Panc1 (cell line): ENCODE measurements at regions of chr6 and their contacts with region 1.

Region 1: DNA sequence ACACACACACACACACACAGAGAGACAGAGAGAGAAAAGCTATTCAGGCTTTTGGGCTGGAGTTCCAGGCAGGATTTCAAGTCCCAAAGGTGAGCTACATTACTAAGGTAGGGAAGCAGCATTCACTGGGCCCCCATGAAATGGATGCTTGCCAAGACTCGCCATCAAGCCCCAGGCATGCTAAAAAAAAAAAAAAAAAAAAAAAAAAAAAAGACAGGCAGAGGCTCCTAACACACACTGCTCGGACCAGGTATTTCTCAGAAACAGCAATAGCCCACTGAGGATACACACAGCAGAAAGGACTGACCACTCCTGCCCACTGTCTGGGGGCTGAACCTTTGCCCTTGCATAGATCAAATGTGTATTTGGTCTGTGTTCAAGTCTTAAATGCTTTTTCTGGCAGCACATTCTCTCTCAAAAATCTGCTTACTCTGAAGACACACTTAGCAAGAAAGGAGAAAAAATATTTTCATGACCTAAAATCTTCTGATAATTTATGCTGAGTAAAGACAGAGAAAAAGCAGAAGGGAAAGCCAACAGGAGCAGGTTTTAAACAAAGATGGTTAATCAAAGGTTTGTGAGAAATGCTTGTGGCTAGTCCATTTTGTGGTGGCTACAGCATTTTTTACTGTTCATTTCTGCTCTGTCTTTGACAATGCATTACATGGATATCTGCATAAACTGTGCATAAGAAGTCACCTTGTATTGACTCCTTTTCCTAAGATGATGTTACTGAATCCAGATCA is 37.9 kb upstream of the BEND6 start:
- DNase-seq: no peak
- ATAC-seq: no peak
- H3K4me3 ChIP-seq: no peak overlapping the region
- H3K27ac ChIP-seq: no peak overlapping the region
- H3K4me1 ChIP-seq: peaks cover 18% of the 10 kb centered on the region
- H3K27me3 ChIP-seq: no peaks in the 10 kb centered on the region
- CTCF ChIP-seq: no peak

Region 2: GRCh38 chr6:56802584-56802983 is 114.4 kb before region 1 on chr6:
- CTCF ChIA-PET with region 1: no interaction called
- POLR2A ChIA-PET with region 1: no interaction called
- in situ Hi-C with region 1: no loop called
- intact Hi-C with region 1: no loop called
- DNase-seq: no peak
- ATAC-seq: peak; percentile 86
- H3K4me3 ChIP-seq: no peak overlapping the region
- H3K27ac ChIP-seq: peak overlapping the region; percentile 86
- H3K4me1 ChIP-seq: peaks cover 58% of the 10 kb centered on the region
- H3K27me3 ChIP-seq: no peaks in the 10 kb centered on the region
- CTCF ChIP-seq: no peak

Region 3: DNA sequence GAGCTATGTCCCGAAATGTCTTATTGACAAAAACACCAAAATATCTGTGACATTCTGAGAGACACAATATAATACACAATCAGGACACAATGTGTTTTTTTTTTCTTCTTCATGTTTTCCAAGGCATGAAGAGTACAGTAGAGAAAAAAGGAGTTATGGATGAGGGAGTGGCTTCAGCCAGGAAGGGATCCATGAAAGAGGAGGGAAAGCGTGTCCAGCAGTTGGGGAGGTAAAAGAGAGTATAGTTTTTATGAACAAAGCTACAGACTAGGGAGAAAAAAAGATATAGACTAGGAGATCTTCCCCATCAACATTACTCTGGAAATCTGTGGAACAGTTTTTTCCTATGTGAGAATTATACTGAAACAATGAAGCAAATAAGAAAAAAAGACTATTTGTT is 361.6 kb after region 1 on chr6:
- CTCF ChIA-PET with region 1: no interaction called
- POLR2A ChIA-PET with region 1: interaction called, 15 read pairs
- in situ Hi-C with region 1: no loop called
- intact Hi-C with region 1: no loop called
- DNase-seq: no peak
- ATAC-seq: no peak
- H3K4me3 ChIP-seq: no peak overlapping the region
- H3K27ac ChIP-seq: no peak overlapping the region
- H3K4me1 ChIP-seq: no peaks in the 10 kb centered on the region
- H3K27me3 ChIP-seq: no peaks in the 10 kb centered on the region; the same call in 1 of the 2 replicates
- CTCF ChIP-seq: no peak